Activated naive CD4-positive, alpha-beta T cell treated with anti-CD3 and anti-CD28 coated beads for 36 hours (primary cell): ENCODE measurements at regions of chr3 and their contacts with region 1.

Region 1: GRCh38 chr3:188954590-188955208 is 217.1 kb upstream of the TPRG1 start:
- DNase-seq: peak; percentile 91
- H3K4me3 Mint-ChIP-seq: no peak overlapping the region
- H3K27ac Mint-ChIP-seq: no peak overlapping the region
- H3K4me1 Mint-ChIP-seq: peaks cover 39% of the 10 kb centered on the region
- H3K27me3 Mint-ChIP-seq: no peaks in the 10 kb centered on the region

Region 2: DNA sequence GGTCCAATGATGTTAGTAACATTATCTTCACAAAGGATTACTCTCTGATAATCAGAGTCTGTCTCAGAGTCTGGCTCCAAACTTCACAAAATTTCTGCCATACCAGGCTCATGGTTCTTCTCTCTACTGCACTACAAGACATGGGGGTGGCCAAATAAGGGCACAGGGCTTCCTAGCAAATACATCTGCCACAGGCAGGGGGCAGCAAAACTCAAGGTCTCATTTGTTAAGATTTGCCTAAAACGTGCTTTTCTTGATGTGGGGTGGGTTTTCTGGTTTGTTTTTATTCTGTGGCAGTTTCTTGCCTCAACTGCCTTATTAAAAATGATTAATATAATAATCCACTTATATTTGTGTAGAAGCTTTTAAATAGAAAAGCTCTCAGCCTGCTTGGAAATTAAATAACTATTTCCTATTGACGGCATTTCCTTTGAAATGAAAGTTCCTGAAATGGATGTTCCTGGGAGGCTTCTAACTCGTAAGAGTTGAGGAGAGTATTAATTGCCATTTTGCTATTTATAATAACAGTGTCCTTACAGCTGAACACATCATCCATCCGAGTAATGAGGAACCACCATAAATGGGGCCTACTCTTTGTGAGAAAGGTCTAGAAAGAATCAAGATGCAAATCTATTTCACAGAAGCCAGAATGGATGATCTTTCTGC is 1338.3 kb before region 1 on chr3:
- CTCF ChIA-PET with region 1: no interaction called
- intact Hi-C with region 1: loop called (anchors 5 kb)
- DNase-seq: peak; percentile 79
- H3K4me3 Mint-ChIP-seq: no peak overlapping the region
- H3K27ac Mint-ChIP-seq: no peak overlapping the region
- H3K4me1 Mint-ChIP-seq: no peaks in the 10 kb centered on the region
- H3K27me3 Mint-ChIP-seq: peaks cover 4% of the 10 kb centered on the region

Region 3: GRCh38 chr3:188294823-188295487 is 659.7 kb before region 1 on chr3:
- CTCF ChIA-PET with region 1: interaction called, 11 read pairs
- intact Hi-C with region 1: loop called (anchors 5 kb)
- DNase-seq: peak; percentile 49
- H3K4me3 Mint-ChIP-seq: no peak overlapping the region
- H3K27ac Mint-ChIP-seq: peak overlapping the region; percentile 69
- H3K4me1 Mint-ChIP-seq: peaks cover 85% of the 10 kb centered on the region
- H3K27me3 Mint-ChIP-seq: no peaks in the 10 kb centered on the region

Region 4: DNA sequence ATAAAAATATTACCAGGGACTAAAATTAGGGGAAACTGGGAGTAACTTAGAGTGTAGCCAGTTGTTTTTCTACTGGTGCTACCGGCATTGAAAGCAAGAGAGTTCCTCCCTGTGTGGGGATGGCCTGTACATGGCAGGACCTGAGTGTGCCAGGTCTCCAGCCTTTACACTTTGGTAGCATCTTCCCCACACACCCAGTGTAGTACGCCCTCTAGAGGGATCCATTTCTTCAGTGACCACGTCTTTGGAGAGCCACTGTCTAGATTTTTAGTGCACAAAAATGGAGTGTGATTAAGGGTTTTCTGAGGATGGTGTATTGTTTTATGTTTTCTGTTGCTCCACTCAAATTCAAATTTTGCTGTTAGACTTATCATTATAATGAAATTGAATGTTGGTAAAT is 289.9 kb before region 1 on chr3:
- CTCF ChIA-PET with region 1: interaction called, 3 read pairs
- intact Hi-C with region 1: loop called (anchors 5 kb)
- DNase-seq: peak; percentile 40
- H3K4me3 Mint-ChIP-seq: no peak overlapping the region
- H3K27ac Mint-ChIP-seq: no peak overlapping the region
- H3K4me1 Mint-ChIP-seq: peaks cover 5% of the 10 kb centered on the region
- H3K27me3 Mint-ChIP-seq: no peaks in the 10 kb centered on the region

Region 5: GRCh38 chr3:188830893-188831292 is 123.8 kb before region 1 on chr3:
- CTCF ChIA-PET with region 1: interaction called, 29 read pairs
- intact Hi-C with region 1: loop called (anchors 2 kb)
- DNase-seq: peak; percentile 7
- H3K4me3 Mint-ChIP-seq: no peak overlapping the region
- H3K27ac Mint-ChIP-seq: no peak overlapping the region
- H3K4me1 Mint-ChIP-seq: peaks cover 21% of the 10 kb centered on the region
- H3K27me3 Mint-ChIP-seq: no peaks in the 10 kb centered on the region

Region 6: GRCh38 chr3:188964957-188965356 is 10.3 kb after region 1 on chr3:
- CTCF ChIA-PET with region 1: interaction called, 10 read pairs
- intact Hi-C with region 1: no loop called
- DNase-seq: no peak
- H3K4me3 Mint-ChIP-seq: no peak overlapping the region
- H3K27ac Mint-ChIP-seq: no peak overlapping the region
- H3K4me1 Mint-ChIP-seq: peaks cover 4% of the 10 kb centered on the region
- H3K27me3 Mint-ChIP-seq: peaks cover 2% of the 10 kb centered on the region

Region 7: GRCh38 chr3:189001559-189001958 is 46.9 kb after region 1 on chr3:
- CTCF ChIA-PET with region 1: no interaction called
- intact Hi-C with region 1: no loop called
- DNase-seq: no peak
- H3K4me3 Mint-ChIP-seq: no peak overlapping the region
- H3K27ac Mint-ChIP-seq: no peak overlapping the region
- H3K4me1 Mint-ChIP-seq: no peaks in the 10 kb centered on the region
- H3K27me3 Mint-ChIP-seq: peaks cover 2% of the 10 kb centered on the region

Region 8: GRCh38 chr3:189076449-189076848 is 121.8 kb after region 1 on chr3:
- CTCF ChIA-PET with region 1: no interaction called
- intact Hi-C with region 1: no loop called
- DNase-seq: no peak
- H3K4me3 Mint-ChIP-seq: no peak overlapping the region
- H3K27ac Mint-ChIP-seq: no peak overlapping the region
- H3K4me1 Mint-ChIP-seq: peaks cover 4% of the 10 kb centered on the region
- H3K27me3 Mint-ChIP-seq: no peaks in the 10 kb centered on the region

Region 9: DNA sequence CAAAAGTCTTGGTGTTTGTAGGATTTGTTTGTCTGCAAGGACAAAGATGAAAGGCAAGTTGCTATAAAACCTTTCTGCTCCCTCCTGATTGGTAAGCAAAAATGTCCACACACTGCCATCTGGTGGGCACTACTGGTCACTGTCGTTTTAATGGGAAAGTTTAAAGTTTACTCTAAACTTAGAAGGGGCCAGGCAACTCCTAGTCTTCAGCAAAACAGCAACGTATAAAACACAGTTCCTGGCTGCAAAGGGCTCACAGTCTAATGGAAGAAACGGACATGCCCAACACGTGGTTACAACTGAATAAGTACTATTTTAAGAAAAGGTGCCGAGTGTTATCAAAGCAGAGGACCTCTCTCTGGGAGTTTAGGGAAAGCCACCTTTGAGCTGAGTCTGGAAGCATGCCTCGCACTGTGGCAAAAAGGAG is 193.4 kb after region 1 on chr3:
- CTCF ChIA-PET with region 1: interaction called, 7 read pairs
- intact Hi-C with region 1: loop called (anchors 1 kb)
- DNase-seq: peak; percentile 85
- H3K4me3 Mint-ChIP-seq: no peak overlapping the region
- H3K27ac Mint-ChIP-seq: no peak overlapping the region
- H3K4me1 Mint-ChIP-seq: peaks cover 9% of the 10 kb centered on the region
- H3K27me3 Mint-ChIP-seq: peaks cover 9% of the 10 kb centered on the region